ENCODE measurements at regions of chr2 and their contacts with region 1.

Region 1: DNA sequence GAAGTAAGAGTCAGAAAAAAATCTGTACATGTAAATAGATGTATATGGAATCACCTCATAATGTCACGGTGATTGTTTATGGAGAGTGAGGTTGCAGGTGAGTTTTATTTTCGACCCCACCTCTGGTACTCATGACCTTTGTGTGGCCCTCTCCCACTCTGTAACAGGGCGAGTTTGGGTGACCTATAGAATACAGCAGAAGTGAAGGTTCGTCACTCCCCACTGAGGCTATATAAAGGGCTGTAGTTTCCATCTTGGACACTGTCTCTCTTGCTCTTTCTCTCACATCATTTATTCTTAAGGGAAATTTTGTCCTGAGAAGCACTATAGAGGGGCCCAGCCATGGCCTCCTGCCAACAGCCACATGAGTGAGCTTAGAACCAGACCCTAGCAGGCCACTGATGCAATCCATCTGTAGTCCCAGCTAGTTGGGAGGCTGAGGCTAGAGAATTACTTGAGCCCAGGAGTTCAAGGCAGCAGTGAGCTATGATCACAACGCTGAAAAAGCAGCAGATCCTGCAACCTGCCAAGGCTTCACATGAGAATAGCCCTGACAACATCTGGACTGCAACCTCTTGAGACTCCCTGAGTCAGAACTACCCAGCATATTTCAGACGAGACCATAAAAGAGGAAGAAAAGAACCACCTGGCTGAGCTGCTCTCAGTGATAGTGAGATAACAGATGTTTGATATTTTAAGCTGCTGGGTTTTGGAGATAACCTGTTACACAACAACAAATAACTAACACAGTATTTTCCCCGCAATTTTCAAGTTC is 74.3 kb upstream of the SLC1A4 start:
- DNase-seq: peak; percentile 63
- CTCF ChIP-seq: no peak

Region 2: DNA sequence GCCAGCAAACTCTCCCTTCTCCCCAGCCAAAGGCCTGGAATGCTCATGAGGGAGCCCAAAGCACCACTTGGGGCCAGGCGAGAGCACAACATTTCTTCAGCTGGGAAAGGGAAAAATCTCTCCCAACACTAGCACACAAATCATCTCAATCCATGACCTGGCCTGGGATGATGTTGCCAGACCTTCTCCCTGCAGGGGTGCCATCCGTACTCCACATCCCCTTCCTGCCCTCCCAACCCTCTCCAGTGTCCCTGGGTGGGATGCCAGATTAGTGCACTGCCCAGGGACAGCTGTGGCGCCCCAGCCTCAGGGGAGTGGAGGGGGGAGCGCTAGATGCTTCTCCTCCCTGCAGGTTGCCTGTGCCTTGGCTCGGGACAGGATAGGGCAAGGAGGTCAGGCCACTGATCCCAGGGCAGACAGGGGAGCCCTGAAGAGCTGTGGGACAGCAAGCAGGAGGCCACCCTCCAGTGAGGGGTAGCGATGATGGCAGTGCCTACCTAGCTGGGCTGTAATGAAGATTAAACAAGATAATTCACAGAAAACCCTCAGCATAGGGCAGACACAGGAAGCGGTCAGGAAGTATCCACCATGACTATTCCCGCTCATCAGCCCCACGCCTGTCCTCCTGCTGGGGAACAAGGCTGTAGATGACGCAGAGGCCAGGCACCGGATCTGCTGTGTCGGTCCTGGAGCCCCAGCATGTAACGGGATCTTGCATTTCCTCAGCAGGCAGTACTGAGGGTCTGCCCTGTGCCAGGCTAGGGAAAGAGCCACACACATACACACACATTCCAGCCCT is 292.3 kb before region 1 on chr2:
- in situ Hi-C with region 1: no loop called
- DNase-seq: no peak
- CTCF ChIP-seq: no peak

Region 3: DNA sequence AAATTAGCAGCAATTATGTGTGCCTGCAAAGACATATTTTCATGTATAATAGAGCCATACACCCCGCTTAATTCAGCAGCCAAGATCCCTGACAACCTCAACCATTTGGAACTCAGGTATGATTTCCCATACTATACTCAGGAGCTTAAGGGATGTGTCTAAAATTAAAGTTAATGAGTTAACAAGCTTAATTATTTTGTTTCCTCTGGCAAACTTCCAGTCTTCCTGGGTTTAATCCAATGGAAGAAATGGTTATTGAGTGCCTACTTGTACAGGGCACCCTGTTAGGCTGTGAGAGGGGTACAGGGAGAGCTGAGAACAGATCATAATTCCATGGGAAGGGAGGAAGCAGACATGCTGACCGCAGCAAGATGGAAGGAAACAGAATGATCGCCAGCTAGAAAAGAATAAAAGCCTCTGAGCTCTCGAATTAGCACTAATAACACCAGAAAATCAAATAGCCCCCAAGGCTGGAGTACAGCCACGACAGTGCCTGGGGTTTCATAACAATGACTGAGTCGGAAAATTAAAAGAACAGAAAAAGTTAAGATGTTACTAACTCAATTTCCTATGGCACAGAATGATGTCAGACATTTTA is 120.5 kb after region 1 on chr2:
- in situ Hi-C with region 1: loop called (anchors 5 kb)
- DNase-seq: no peak
- CTCF ChIP-seq: no peak